ENCODE measurements at regions of chr3 and their contacts with region 1.

Region 1: DNA sequence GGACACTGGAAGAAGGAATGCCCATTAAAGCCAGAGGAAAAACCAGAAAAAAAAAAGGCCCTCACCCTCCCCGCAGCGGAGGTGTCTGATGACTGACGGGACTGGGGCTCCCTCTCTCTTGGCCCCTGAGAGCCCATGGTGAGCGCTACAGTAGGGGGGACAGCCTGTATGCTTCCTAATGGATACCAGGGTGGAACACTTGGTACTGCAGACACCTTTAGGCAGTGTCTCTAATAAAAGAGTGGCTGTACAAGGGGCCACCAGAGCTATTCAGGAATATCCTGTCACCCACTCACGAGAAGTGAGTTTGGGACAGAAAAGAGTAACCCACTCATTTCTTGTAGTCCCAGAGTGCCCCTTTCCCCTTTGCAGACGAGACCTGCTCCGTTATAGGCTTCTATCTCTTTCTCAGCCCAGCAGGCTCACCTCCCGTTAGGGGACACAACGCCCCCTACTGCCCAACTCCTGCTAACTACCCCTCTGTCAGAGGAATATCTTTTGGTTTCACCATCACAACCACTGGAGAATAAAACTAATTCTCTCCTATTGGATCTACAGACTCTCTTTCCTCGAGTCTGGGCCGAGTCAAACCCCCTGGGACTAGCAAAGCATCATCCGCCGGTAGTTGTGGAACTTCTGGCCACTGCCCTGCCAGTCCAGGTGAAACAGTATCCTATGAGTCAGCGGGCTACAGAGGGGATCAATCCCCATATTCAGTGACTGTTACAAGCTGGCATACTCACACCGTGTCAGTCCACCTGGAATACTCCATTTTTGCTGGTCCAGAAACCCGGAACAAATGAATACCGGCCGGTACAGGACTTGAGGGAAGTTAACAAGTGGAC is 40.8 kb downstream of the ZBTB11 start:
- DNase-seq: peak; percentile 27
- ATAC-seq: peak; percentile 94
- H3K4me3 ChIP-seq: no peak overlapping the region
- H3K27ac ChIP-seq: no peak overlapping the region
- H3K4me1 ChIP-seq: 0 out of 4 replicates have a peak, but pooled peaks cover 0 to 3% of the 10 kb centered on the region in 2 experiments
- H3K27me3 ChIP-seq: no peaks in the 10 kb centered on the region
- CTCF ChIP-seq: peak; percentile 40 to 80 (median 78); a peak in 5 of 6 replicates
- POLR2A ChIP-seq: no peak
- RAD21 ChIP-seq: peak; percentile 66

Region 2: GRCh38 chr3:101203411-101203810 is 432.8 kb before region 1 on chr3:
- CTCF ChIA-PET with region 1: no interaction called
- POLR2A ChIA-PET with region 1: no interaction called
- RAD21 ChIA-PET with region 1: no interaction called
- intact Hi-C with region 1: loop called (anchors 10 kb)
- DNase-seq: no peak
- ATAC-seq: no peak
- H3K4me3 ChIP-seq: no peak overlapping the region
- H3K27ac ChIP-seq: no peak overlapping the region
- H3K4me1 ChIP-seq: no peaks in the 10 kb centered on the region
- H3K27me3 ChIP-seq: no peaks in the 10 kb centered on the region
- CTCF ChIP-seq: no peak
- POLR2A ChIP-seq: no peak
- RAD21 ChIP-seq: no peak

Region 3: GRCh38 chr3:102354818-102355515 is 718.8 kb after region 1 on chr3:
- CTCF ChIA-PET with region 1: no interaction called
- POLR2A ChIA-PET with region 1: no interaction called
- RAD21 ChIA-PET with region 1: no interaction called
- intact Hi-C with region 1: no loop called
- DNase-seq: peak; percentile 12
- ATAC-seq: no peak
- H3K4me3 ChIP-seq: no peak overlapping the region
- H3K27ac ChIP-seq: no peak overlapping the region
- H3K4me1 ChIP-seq: peaks cover 0 to 4% of the 10 kb centered on the region in 2 experiments; a peak in 2 of 4 replicates
- H3K27me3 ChIP-seq: no peaks in the 10 kb centered on the region
- CTCF ChIP-seq: no peak
- POLR2A ChIP-seq: no peak
- RAD21 ChIP-seq: no peak

Measured in HCT116 (cell line).